B cell (primary cell): ENCODE measurements at regions of chr19 and their contacts with region 1.

Region 1: DNA sequence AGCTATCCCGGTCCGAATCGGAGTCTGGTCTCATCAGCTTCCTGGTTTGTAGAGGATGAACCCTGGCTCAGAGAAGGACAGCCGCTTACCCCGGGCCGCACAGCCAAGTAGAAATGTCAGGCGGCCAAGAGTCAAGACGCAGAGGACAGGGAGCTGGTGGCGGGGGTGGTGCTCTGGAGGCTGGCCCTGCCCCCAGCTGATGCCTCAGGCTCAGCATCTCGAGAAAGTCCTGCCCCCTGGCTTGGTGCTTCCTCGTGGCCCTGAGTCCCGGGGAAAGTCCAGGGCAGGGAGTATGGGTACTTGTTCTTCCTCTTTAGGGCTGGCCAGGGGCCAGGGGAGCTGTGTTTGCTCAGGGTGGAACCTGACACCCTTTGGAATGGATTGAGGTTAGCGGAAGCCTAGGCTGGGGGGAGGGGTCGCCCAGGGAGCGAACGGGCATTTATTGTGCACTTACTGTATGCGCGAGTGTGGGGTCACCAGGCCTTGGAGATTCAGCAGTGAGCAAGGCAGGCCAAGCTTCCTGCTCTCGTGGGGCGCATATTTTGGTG is 2.2 kb downstream of the TJP3 start:
- DNase-seq: no peak
- ATAC-seq: no peak
- H3K4me3 ChIP-seq: no peak overlapping the region
- H3K4me3 Mint-ChIP-seq: no peak overlapping the region
- H3K27ac ChIP-seq: no peak overlapping the region
- H3K27ac Mint-ChIP-seq: no peak overlapping the region
- H3K4me1 ChIP-seq: no peaks in the 10 kb centered on the region
- H3K4me1 Mint-ChIP-seq: peaks cover 3% of the 10 kb centered on the region
- H3K27me3 ChIP-seq: peaks cover 0 to 20% (median 0%) of the 10 kb centered on the region in 4 experiments
- H3K27me3 Mint-ChIP-seq: peaks cover 9% of the 10 kb centered on the region
- CTCF ChIP-seq: no peak

Region 2: DNA sequence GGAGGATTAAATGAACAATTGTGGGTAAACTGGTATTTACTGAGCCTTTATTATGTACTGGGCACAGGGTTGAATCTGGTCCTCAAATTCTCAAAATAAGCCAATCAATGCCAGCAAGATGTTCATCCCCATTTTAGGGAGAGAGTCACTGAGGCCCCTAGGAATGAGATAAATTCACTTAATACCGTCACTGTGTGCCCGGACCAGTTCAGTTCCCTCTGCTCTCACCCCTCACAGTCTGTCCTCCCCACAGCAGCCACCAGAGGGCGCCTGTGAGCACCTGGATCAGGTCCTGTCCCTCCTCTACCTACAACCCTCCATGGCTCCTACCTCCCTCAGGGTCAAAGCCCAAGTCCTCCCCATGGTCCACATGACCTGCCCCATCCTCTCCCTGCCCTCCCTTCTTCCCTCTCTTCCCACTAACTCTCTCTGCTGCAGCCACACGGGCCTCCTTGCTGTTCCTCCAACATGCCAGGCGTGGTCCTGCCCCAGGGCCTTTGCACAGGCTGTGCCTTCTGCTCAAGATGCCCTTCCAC is 385.9 kb before region 1 on chr19:
- CTCF ChIA-PET with region 1: no interaction called
- POLR2A ChIA-PET with region 1: no interaction called
- intact Hi-C with region 1: loop called (anchors 5 kb)
- DNase-seq: peak; percentile 62
- ATAC-seq: peak; percentile 64
- H3K4me3 ChIP-seq: no peak overlapping the region
- H3K4me3 Mint-ChIP-seq: no peak overlapping the region
- H3K27ac ChIP-seq: no peak overlapping the region
- H3K27ac Mint-ChIP-seq: no peak overlapping the region
- H3K4me1 ChIP-seq: no peaks in the 10 kb centered on the region
- H3K4me1 Mint-ChIP-seq: no peaks in the 10 kb centered on the region
- H3K27me3 ChIP-seq: peaks cover 0 to 14% (median 0%) of the 10 kb centered on the region in 4 experiments
- H3K27me3 Mint-ChIP-seq: peaks cover 36% of the 10 kb centered on the region
- CTCF ChIP-seq: peak; percentile 70

Region 3: GRCh38 chr19:3544742-3545668 is 165.3 kb before region 1 on chr19:
- CTCF ChIA-PET with region 1: interaction called, 3 read pairs
- POLR2A ChIA-PET with region 1: no interaction called
- intact Hi-C with region 1: loop called (anchors 1 kb)
- DNase-seq: peak; percentile 78
- ATAC-seq: peak; percentile 78
- H3K4me3 ChIP-seq: no peak overlapping the region
- H3K4me3 Mint-ChIP-seq: no peak overlapping the region
- H3K27ac ChIP-seq: no peak overlapping the region
- H3K27ac Mint-ChIP-seq: peak overlapping the region; percentile 86
- H3K4me1 ChIP-seq: no peaks in the 10 kb centered on the region
- H3K4me1 Mint-ChIP-seq: peaks cover 8% of the 10 kb centered on the region
- H3K27me3 ChIP-seq: no peaks in the 10 kb centered on the region
- H3K27me3 Mint-ChIP-seq: no peaks in the 10 kb centered on the region
- CTCF ChIP-seq: peak; percentile 90

Region 4: GRCh38 chr19:3586124-3586626 is 124.2 kb before region 1 on chr19:
- CTCF ChIA-PET with region 1: interaction called, 8 read pairs
- POLR2A ChIA-PET with region 1: no interaction called
- intact Hi-C with region 1: loop called (anchors 5 kb)
- DNase-seq: peak; percentile 60
- ATAC-seq: peak; percentile 36
- H3K4me3 ChIP-seq: peak overlapping the region in 4 of 5 experiments; percentile 37 to 51 (median 42)
- H3K4me3 Mint-ChIP-seq: peak overlapping the region; percentile 66
- H3K27ac ChIP-seq: no peak overlapping the region
- H3K27ac Mint-ChIP-seq: no peak overlapping the region
- H3K4me1 ChIP-seq: peaks cover 8 to 12% of the 10 kb centered on the region in 2 donors
- H3K4me1 Mint-ChIP-seq: no peaks in the 10 kb centered on the region
- H3K27me3 ChIP-seq: peaks cover 0 to 13% (median 6%) of the 10 kb centered on the region in 4 experiments
- H3K27me3 Mint-ChIP-seq: no peaks in the 10 kb centered on the region
- CTCF ChIP-seq: peak; percentile 69

Region 5: GRCh38 chr19:3613818-3614661 is 96.3 kb before region 1 on chr19:
- CTCF ChIA-PET with region 1: no interaction called
- POLR2A ChIA-PET with region 1: no interaction called
- intact Hi-C with region 1: no loop called
- DNase-seq: no peak
- ATAC-seq: no peak
- H3K4me3 ChIP-seq: no peak overlapping the region
- H3K4me3 Mint-ChIP-seq: no peak overlapping the region
- H3K27ac ChIP-seq: no peak overlapping the region
- H3K27ac Mint-ChIP-seq: no peak overlapping the region
- H3K4me1 ChIP-seq: peaks cover 12 to 15% of the 10 kb centered on the region in 2 donors
- H3K4me1 Mint-ChIP-seq: peaks cover 15% of the 10 kb centered on the region
- H3K27me3 ChIP-seq: no peaks in the 10 kb centered on the region
- H3K27me3 Mint-ChIP-seq: no peaks in the 10 kb centered on the region
- CTCF ChIP-seq: no peak

Region 6: DNA sequence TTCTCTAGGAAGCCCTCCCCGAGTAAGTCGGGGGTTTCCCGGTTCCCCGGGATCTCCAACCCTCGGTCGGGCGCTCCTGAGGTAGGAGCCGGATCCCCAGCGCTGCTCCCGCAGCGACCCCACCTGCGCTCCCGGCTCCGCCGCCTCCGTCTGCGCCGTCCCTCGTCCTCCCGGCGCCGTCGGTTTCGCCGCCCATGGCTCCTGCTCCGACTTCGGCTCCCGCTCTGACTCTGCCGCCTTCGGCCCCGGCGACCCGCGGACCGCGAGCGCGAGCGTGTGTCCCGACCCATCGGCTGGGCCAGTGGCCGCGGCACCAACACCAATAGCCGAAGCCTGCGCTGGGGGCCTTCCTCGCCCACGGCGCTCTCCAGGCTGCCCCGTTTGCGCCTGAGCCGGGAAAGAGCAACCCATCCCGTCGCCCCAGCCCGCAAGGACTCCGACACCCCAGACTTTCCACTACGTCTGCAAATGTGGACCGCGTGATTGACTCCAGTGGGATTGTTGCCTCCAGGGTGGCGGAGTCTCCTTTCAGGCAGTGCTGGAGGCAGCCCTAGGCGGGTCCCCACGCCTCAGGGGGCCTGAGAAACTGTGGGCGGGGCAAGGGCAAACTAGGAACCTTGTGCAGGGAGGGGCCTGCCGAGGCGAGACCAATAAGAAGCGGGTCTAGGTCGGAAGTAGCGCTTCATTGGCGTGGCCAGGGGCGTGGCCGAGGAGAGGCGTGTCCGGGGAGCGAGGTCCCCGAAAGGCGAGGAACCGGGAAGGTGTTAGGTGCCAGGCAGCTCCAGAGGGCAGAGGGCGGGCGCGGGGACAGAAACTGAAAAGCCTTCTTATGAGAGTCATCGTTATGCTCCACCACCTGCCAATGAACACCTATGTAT is 83.6 kb before region 1 on chr19 and contains the start of gene CACTIN:
- CTCF ChIA-PET with region 1: no interaction called
- POLR2A ChIA-PET with region 1: no interaction called
- intact Hi-C with region 1: loop called (anchors 2 kb)
- DNase-seq: peak; percentile 99
- ATAC-seq: peak; percentile 98
- H3K4me3 ChIP-seq: peak within 1 kb of the TSS; percentile 70 to 98 (median 76)
- H3K4me3 Mint-ChIP-seq: peak within 1 kb of the TSS; percentile 96
- H3K27ac ChIP-seq: peak within 1 kb of the TSS; percentile 96 to 98
- H3K27ac Mint-ChIP-seq: peak within 1 kb of the TSS; percentile 100
- H3K4me1 ChIP-seq: peaks cover 17 to 21% of the 10 kb centered on the region in 2 donors
- H3K4me1 Mint-ChIP-seq: peaks cover 26% of the 10 kb centered on the region
- H3K27me3 ChIP-seq: no peaks in the 10 kb centered on the region
- H3K27me3 Mint-ChIP-seq: no peaks in the 10 kb centered on the region
- CTCF ChIP-seq: no peak
- total RNA-seq, gene CACTIN: 41.8 and 48.0 TPM in 2 replicates

Region 7: DNA sequence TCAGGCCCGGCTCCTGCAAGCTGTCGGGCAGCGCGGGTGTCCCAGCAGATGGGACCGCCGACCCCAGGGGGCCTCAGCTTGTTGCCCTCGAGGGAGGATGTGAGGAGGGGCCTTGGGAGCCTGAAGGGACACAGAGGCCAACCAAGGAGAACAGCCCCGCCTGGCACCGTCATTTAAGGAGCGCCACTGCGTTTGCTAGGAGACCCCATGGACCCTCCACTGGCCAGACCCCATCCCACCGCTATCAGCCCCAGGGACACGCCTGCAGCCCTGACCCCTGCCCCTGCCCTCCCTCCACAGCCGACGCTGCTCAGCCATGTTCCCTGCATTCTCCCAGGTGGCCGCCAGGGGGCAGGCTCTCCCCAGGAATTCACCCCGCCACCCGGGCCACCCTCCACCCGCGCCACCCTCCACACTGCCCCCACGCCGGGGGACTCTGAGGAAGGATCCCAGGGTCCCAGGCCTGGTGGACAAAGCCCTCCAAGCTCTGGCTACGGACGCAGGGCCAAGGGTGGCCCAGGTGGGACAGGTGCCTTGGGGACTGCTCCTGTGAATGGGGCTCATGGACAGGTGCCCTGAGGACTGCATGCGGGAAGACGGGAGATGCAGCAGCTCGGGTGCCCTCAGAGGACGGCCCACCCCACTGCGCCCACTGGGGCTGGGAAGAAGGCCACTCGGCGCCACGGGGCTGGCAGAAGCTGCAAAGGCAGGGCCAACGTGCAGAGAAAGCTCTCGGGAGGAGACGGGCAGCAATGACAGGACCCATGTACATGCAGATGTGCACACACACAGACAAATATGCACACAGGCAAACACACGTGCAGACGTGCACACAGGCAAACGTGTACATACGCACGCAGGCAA is 44.4 kb before region 1 on chr19:
- CTCF ChIA-PET with region 1: interaction called, 110 read pairs
- POLR2A ChIA-PET with region 1: no interaction called
- intact Hi-C with region 1: loop called (anchors 1 kb)
- DNase-seq: peak; percentile 82
- ATAC-seq: peak; percentile 89
- H3K4me3 ChIP-seq: peak overlapping the region in 4 of 5 experiments; percentile 12 to 50 (median 32)
- H3K4me3 Mint-ChIP-seq: peak overlapping the region; percentile 74
- H3K27ac ChIP-seq: peak overlapping the region in 1 of 2 donors; percentile 55
- H3K27ac Mint-ChIP-seq: peak overlapping the region; percentile 65
- H3K4me1 ChIP-seq: peaks cover 23 to 28% of the 10 kb centered on the region in 2 donors
- H3K4me1 Mint-ChIP-seq: peaks cover 38% of the 10 kb centered on the region
- H3K27me3 ChIP-seq: peaks cover 0 to 4% (median 2%) of the 10 kb centered on the region in 4 experiments
- H3K27me3 Mint-ChIP-seq: no peaks in the 10 kb centered on the region
- CTCF ChIP-seq: peak; percentile 94